ENCODE measurements at regions of chr19 and their contacts with region 1.

Region 1: GRCh38 chr19:4471403-4472173 is 509 bp upstream of the HDGFL2 start:
- DNase-seq: peak; percentile 94 to 98
- H3K4me3 ChIP-seq: peak overlapping the region; percentile 59; the same call in 1 of the 2 replicates
- H3K27ac ChIP-seq: peak overlapping the region; percentile 81
- H3K4me1 ChIP-seq: peaks cover 6% of the 10 kb centered on the region; the same call in 1 of the 2 replicates
- H3K27me3 ChIP-seq: no peaks in the 10 kb centered on the region
- CTCF ChIP-seq: no peak

Region 2: DNA sequence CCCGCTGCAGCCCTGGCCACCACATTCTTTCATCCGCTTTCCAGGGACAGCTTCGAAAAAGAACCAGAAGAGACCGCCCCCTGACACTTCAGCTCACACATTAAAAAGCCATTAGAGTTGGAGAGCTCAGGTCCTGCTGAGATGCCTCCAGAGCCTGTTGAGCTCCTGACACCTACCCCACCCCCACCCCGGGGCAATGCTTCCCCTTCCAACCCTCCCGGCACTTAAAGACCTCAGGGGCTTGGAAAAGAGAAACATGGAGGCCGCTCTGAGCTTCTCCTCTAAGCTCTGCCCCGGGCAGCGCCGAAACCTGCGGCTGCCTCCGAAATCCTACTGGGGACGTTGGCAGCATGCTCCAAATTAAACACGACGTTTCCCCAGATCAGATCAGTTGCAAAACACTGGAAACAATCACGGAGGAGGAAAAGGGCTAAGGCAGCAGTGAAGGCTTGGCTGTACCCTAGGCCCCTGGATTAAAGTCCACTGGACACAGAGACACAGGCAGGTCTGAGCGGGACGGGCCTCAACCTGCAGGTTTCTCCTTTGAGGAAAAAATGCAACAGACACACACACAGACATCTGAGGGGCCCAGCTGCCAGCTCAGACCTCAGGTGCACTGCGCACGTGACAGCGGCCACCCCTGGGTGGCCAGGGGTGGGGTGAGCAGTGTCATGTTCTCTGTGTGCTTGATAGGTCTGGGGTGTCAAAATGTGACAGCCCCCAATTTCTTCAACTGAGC is 80.9 kb before region 1 on chr19:
- CTCF ChIA-PET with region 1: no interaction called
- POLR2A ChIA-PET with region 1: no interaction called
- intact Hi-C with region 1: no loop called
- DNase-seq: no peak
- H3K4me3 ChIP-seq: no peak overlapping the region
- H3K27ac ChIP-seq: no peak overlapping the region
- H3K4me1 ChIP-seq: peaks cover 16% of the 10 kb centered on the region
- H3K27me3 ChIP-seq: no peaks in the 10 kb centered on the region
- CTCF ChIP-seq: no peak

Region 3: GRCh38 chr19:4457654-4458395 is 13.8 kb before region 1 on chr19 and contains the start of gene UBXN6:
- CTCF ChIA-PET with region 1: no interaction called
- POLR2A ChIA-PET with region 1: no interaction called
- intact Hi-C with region 1: loop called (anchors 1 kb)
- DNase-seq: peak; percentile 94
- H3K4me3 ChIP-seq: peak within 1 kb of the TSS; percentile 64
- H3K27ac ChIP-seq: 0 out of 2 replicates have a peak within 1 kb of the TSS, but pooled peaks have one; percentile 43
- H3K4me1 ChIP-seq: no peaks in the 10 kb centered on the region
- H3K27me3 ChIP-seq: no peaks in the 10 kb centered on the region
- CTCF ChIP-seq: no peak
- total RNA-seq, gene UBXN6: 79.4 and 94.7 TPM in 2 replicates